ENCODE measurements at regions of chr15 and their contacts with region 1.

Region 1: GRCh38 chr15:70097337-70098169 is at the start of gene TLE3:
- DNase-seq: peak; percentile 100
- H3K4me3 ChIP-seq: peak within 1 kb of the TSS; percentile 95 to 96
- H3K27ac ChIP-seq: peak within 1 kb of the TSS; percentile 97 to 98
- H3K4me1 ChIP-seq: peaks cover 5% of the 10 kb centered on the region
- H3K27me3 ChIP-seq: no peaks in the 10 kb centered on the region
- CTCF ChIP-seq: peak; percentile 26 to 86 (median 52)
- POLR2A ChIP-seq: peak; percentile 99
- total RNA-seq, gene TLE3: 157 to 246 TPM

Region 2: GRCh38 chr15:69462493-69463181 is 634.9 kb before region 1 on chr15:
- intact Hi-C with region 1: loop called (anchors 10 kb)
- DNase-seq: peak; percentile 94
- H3K4me3 ChIP-seq: peak overlapping the region; percentile 30 to 36
- H3K27ac ChIP-seq: peak overlapping the region; percentile 79 to 88
- H3K4me1 ChIP-seq: no peaks in the 10 kb centered on the region
- H3K27me3 ChIP-seq: no peaks in the 10 kb centered on the region
- CTCF ChIP-seq: peak; percentile 82 to 97 (median 90)
- POLR2A ChIP-seq: peak; percentile 82

Region 3: DNA sequence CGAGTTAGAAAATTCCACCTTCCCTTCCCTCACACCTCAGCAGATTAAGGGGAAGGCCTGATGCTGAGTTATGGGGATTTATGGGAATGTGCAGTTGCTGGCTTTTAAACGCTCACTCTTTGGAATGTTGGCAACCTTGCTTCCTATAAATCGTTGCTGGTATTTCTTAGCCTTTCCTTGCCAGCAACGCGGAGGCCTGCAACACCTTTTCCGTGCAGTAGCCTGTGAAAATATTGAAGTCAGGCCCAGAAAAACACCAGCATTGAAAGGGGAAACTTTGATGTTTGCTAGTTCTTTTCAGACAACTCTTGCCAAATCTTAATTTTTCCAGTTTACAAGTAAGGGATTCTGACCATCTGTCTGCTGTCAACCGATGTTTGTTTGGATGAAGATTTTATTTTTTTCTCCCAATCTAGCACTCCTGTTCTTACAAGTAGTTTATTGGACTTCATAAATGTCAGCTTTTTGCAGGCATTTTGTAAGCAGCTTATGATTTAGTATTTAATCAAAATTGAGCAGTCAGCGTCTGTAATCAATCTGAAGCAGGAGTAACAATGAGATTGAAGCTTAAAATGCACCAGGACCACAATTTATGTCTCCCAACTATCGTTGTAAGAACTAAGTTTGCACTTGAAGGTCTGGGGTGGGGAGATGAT is 393.9 kb before region 1 on chr15:
- intact Hi-C with region 1: loop called (anchors 2 kb)
- DNase-seq: peak; percentile 79
- H3K4me3 ChIP-seq: no peak overlapping the region
- H3K27ac ChIP-seq: no peak overlapping the region
- H3K4me1 ChIP-seq: no peaks in the 10 kb centered on the region
- H3K27me3 ChIP-seq: no peaks in the 10 kb centered on the region
- CTCF ChIP-seq: no peak
- POLR2A ChIP-seq: no peak

Region 4: DNA sequence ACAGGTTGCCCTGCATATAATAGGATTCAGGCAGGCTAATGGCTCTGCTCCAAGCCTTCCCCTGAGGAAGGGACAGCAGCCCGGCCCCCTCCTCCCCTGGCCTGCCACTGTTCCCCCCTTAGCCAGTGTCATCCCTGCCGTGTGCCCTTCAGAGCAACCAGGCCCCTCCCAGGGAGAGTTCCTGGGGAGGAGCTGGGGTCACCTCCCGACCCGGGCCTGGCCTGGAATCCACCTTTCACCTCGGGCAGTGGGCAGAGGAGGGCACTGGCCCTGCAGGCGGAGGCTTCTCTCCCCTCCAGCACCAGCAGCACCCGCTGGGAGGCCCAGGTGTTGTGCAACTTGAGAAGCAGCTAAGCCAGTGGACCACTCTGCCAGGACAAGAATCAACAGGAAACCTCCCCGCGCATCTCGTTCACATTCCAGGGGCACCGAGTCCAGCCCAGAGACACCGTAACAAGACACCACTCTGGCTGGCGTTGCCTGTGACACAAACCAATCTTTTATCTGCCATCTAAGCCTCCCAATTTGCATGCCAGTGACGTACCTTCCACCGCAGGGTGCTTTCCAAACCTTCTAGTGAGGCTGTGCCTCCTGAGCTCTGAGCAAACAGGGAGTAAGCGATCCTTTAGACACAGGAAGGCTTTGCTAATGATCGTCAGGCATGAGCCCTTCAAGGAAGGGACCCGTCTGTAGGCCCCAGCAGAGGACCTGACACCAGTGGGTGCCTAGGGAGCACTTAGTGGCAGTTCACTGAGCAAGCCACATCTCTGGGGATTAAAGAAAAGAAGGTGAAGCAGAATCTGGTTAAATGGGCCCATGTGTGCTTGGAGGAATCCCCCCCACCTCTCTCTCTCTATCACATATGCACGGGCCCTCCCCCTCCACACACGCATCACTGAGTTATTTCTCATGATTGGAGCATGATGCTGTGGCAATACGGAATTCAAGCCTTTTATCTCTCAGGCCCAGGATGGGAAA is 99.0 kb after region 1 on chr15:
- intact Hi-C with region 1: loop called (anchors 2 kb)
- DNase-seq: peak; percentile 96
- H3K4me3 ChIP-seq: no peak overlapping the region
- H3K27ac ChIP-seq: peak overlapping the region; percentile 70 to 78
- H3K4me1 ChIP-seq: no peaks in the 10 kb centered on the region
- H3K27me3 ChIP-seq: no peaks in the 10 kb centered on the region
- CTCF ChIP-seq: peak in 1 of 4 experiments; percentile 35
- POLR2A ChIP-seq: peak; percentile 50

Region 5: DNA sequence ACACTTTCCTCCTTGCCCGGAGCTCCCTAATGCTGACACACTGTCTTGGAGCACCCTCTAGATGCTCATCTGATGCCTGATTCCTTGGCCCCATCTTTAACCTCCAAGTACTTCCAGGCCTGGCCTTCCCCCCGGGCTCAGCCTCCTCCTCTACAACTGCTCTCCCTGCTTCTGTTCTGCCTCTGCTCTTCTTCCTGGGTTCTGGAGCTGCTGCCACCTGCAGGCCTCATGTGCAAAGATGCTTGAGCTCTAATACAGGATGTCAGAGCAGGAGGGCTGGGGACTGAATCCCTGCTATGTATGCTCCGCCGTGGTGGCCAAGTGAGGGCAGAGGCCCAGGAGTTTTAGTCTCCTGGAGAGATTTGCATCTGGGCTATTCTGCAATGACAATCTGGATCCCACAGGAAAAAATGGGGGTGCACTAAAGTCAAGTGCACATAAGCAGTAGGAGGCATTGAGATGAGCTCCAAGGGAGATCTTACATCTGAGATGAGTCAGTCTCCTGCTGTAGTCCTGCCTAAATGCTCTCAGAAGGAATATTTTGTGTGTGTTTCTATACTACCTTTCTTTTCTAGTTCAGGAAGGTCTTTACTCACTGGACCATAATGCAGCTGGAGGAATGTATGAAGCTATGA is 369.5 kb after region 1 on chr15:
- intact Hi-C with region 1: loop called (anchors 10 kb)
- DNase-seq: peak; percentile 53
- H3K4me3 ChIP-seq: no peak overlapping the region
- H3K27ac ChIP-seq: no peak overlapping the region
- H3K4me1 ChIP-seq: no peaks in the 10 kb centered on the region
- H3K27me3 ChIP-seq: no peaks in the 10 kb centered on the region
- CTCF ChIP-seq: peak in 3 of 4 experiments; percentile 36 to 67 (median 63)
- POLR2A ChIP-seq: no peak

Measured in prostate gland (tissue), 2 donors.